ENCODE measurements at regions of chr1 and their contacts with region 1.

Region 1: DNA sequence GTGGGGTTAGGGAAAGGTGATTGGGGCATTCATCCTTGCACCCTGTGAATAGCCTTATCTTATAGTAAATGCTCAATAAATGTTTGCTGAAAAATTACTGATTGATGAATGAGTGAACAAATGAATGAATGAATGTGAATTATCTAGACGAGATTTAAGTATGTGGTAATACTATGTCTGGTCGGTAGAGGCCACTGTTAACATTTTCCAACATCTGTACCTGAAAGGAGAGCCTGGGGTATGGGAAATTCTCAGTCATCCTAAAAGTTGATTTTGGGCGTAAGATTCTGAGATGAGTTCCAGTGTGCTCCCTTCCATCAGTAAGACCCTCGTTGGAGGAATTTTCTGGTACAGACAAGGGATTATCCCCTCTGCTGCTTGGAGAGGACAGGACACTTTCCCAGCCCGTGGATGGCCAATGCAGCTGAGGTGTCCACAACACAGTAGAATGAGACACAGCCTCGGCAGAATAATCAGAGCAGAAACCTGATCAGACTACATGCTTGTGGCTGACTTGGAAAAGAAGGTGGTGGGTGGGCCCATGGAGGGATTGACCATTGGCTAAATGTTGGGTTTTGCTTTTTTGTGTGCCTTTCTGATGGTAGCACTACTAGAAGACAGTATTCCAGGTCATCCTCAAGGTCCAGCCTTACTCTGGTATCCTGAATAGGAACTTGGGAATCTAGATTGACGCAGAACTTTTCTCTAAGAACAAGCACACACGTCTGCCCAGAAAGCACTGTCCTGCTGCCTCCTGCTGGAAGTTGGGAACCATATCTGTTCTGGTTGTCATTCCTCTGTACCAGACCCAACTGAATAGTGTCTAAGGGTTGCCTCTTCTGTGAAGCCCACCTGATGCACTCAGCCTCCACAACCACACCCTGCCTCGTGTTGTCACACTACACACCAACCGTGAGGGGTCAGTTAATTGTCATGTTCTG is 262.0 kb downstream of the TNR start:
- DNase-seq: peak; percentile 59
- H3K4me3 ChIP-seq: no peak overlapping the region
- H3K27ac ChIP-seq: no peak overlapping the region
- H3K4me1 ChIP-seq: peaks cover 14% of the 10 kb centered on the region
- H3K27me3 ChIP-seq: peaks cover 15 to 16% of the 10 kb centered on the region in 2 experiments
- CTCF ChIP-seq: peak; percentile 44 to 47
- POLR2A ChIP-seq: no peak

Region 2: GRCh38 chr1:175373786-175374623 is 107.4 kb before region 1 on chr1:
- CTCF ChIA-PET with region 1: interaction called, 6 read pairs
- POLR2A ChIA-PET with region 1: no interaction called
- dilution Hi-C with region 1: no loop called
- intact Hi-C with region 1: loop called (anchors 5 kb)
- DNase-seq: peak; percentile 38
- H3K4me3 ChIP-seq: no peak overlapping the region
- H3K27ac ChIP-seq: no peak overlapping the region
- H3K4me1 ChIP-seq: no peaks in the 10 kb centered on the region
- H3K27me3 ChIP-seq: peaks cover 0 to 3% of the 10 kb centered on the region in 2 experiments
- CTCF ChIP-seq: peak; percentile 73 to 82
- POLR2A ChIP-seq: no peak

Region 3: GRCh38 chr1:175536368-175536767 is 55.0 kb after region 1 on chr1:
- CTCF ChIA-PET with region 1: interaction called, 9 read pairs
- POLR2A ChIA-PET with region 1: no interaction called
- dilution Hi-C with region 1: no loop called
- intact Hi-C with region 1: loop called (anchors 2 kb)
- DNase-seq: peak; percentile 95
- H3K4me3 ChIP-seq: no peak overlapping the region
- H3K27ac ChIP-seq: peak overlapping the region; percentile 91
- H3K4me1 ChIP-seq: peaks cover 30% of the 10 kb centered on the region
- H3K27me3 ChIP-seq: no peaks in the 10 kb centered on the region
- CTCF ChIP-seq: no peak
- POLR2A ChIP-seq: peak; percentile 84

Region 4: GRCh38 chr1:175673371-175674150 is 192.2 kb after region 1 on chr1:
- CTCF ChIA-PET with region 1: interaction called, 5 read pairs
- POLR2A ChIA-PET with region 1: no interaction called
- dilution Hi-C with region 1: no loop called
- intact Hi-C with region 1: loop called (anchors 2 kb)
- DNase-seq: peak; percentile 82
- H3K4me3 ChIP-seq: no peak overlapping the region
- H3K27ac ChIP-seq: peak overlapping the region; percentile 69
- H3K4me1 ChIP-seq: peaks cover 25% of the 10 kb centered on the region
- H3K27me3 ChIP-seq: no peaks in the 10 kb centered on the region
- CTCF ChIP-seq: no peak
- POLR2A ChIP-seq: no peak

Region 5: DNA sequence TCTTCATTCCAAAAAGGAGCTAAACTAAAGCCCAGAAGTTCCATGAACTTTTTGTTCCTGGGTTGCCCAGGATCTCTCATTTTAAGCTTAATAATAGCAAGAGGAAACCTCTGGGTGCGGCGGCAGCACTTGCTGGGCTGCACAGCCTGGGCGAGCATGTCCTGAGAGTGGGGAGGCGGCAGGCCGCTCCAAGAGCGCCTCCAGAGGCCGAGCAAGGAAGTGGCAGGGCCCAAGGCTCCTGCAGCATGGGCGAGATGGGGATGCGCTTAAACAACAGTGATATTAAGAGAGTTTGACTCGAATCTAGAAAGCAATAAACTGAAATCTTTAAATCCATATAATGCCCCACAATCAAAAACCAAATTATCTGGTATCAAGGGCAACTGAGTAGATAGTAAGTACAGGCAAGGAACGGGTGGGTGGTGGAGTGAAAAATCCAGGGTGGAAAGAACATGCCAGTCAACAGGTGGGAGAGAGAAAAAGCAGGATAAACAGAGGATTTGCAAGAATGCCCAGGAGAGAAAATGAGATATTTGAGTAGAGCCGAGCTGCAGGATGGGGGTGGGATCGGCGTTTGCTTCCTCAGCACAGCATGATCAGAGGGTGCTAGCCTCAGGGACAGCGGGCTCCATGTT is 276.1 kb after region 1 on chr1:
- CTCF ChIA-PET with region 1: interaction called, 10 read pairs
- POLR2A ChIA-PET with region 1: no interaction called
- dilution Hi-C with region 1: no loop called
- intact Hi-C with region 1: loop called (anchors 1 kb)
- DNase-seq: peak; percentile 35
- H3K4me3 ChIP-seq: no peak overlapping the region
- H3K27ac ChIP-seq: no peak overlapping the region
- H3K4me1 ChIP-seq: no peaks in the 10 kb centered on the region
- H3K27me3 ChIP-seq: peaks cover 0 to 7% of the 10 kb centered on the region in 2 experiments
- CTCF ChIP-seq: peak; percentile 95
- POLR2A ChIP-seq: no peak

Region 6: DNA sequence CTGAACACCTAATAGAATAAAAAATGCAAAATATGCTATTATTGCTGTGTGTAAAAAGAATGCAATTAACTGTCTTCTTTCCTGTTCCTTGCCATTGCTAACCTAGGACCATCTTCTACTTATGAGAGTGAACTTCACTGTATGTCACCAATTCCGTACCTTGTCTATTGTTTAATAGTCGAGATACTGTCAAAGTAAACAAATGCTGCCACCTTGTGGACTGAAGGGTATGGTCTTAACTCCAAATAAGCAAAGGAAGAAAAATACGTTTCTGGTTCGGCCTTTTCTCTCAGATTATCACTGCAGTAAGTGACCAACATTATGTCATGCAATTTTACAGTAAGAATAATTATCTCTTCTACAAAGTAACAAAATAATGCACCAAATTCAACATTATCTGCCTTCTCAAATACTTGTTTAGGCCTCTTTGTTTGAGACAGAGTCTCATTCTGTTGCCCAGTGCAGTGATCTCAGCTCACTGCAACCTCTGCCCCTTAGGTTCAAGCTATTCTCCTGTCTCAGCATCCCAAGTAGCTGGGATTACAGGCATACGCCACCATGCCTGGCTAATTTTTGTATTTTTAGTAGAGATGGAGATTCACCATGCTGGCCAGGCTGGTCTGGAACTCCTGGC is 592.2 kb after region 1 on chr1:
- CTCF ChIA-PET with region 1: interaction called, 7 read pairs
- POLR2A ChIA-PET with region 1: no interaction called
- dilution Hi-C with region 1: no loop called
- intact Hi-C with region 1: loop called (anchors 1 kb)
- DNase-seq: peak; percentile 78
- H3K4me3 ChIP-seq: no peak overlapping the region
- H3K27ac ChIP-seq: no peak overlapping the region
- H3K4me1 ChIP-seq: no peaks in the 10 kb centered on the region
- H3K27me3 ChIP-seq: no peaks in the 10 kb centered on the region
- CTCF ChIP-seq: peak; percentile 52 to 56
- POLR2A ChIP-seq: no peak

Measured in endothelial cell of umbilical vein (primary cell).